ENCODE measurements at regions of chr3 and their contacts with region 1.

Region 1: DNA sequence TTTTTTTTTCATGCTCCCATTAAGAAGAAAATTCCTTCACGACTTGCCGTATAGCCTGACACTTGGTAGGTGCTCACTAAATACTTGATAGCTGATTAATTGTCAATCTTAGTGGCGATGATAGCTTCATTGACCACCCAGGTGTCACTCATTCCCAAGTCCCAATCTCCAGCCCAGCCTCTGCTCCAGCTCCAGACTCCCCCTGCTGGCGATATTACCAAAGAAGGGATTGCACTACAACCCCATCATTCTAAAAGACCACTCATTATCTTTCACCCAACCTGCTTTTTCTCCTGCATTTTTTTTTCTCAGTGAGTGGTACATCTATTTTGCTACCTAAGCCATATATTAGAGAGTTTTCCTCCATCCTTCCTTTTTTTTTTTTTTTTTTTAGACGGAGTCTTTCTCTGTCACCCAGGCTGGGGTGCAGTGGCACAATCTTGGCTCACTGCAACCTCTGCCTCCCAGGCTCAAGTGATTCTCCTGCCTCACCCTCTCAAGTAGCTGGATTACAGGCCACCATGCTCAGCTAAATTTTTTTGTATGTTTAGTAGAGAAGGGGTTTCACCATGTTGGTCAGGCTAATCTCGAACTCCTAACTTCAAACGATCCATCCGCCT is 19.5 kb upstream of the COMMD2 start:
- DNase-seq: peak in 1 of 2 experiments; percentile 79
- H3K4me3 ChIP-seq: no peak overlapping the region
- H3K27ac ChIP-seq: no peak overlapping the region
- H3K4me1 ChIP-seq: no peaks in the 10 kb centered on the region
- H3K27me3 ChIP-seq: no peaks in the 10 kb centered on the region; a peak in 1 of 7 replicates
- CTCF ChIP-seq: peak; percentile 77 to 87 (median 86)
- EP300 ChIP-seq: no peak
- POLR2A ChIP-seq: no peak
- RAD21 ChIP-seq: peak; percentile 73 to 76

Region 2: GRCh38 chr3:149512209-149512782 is 259.5 kb before region 1 on chr3:
- CTCF ChIA-PET with region 1: interaction called, 53 read pairs
- POLR2A ChIA-PET with region 1: no interaction called
- DNase-seq: peak in 1 of 2 experiments; percentile 72
- H3K4me3 ChIP-seq: peak overlapping the region in 1 of 4 experiments; percentile 34; a peak in 1 of 8 replicates
- H3K27ac ChIP-seq: no peak overlapping the region
- H3K4me1 ChIP-seq: no peaks in the 10 kb centered on the region
- H3K27me3 ChIP-seq: no peaks in the 10 kb centered on the region
- CTCF ChIP-seq: peak; percentile 81 to 92 (median 89)
- EP300 ChIP-seq: no peak
- POLR2A ChIP-seq: no peak
- RAD21 ChIP-seq: peak; percentile 92 to 93

Region 3: GRCh38 chr3:149717391-149718056 is 54.2 kb before region 1 on chr3:
- CTCF ChIA-PET with region 1: interaction called, 11 read pairs
- POLR2A ChIA-PET with region 1: no interaction called
- DNase-seq: peak in 1 of 2 experiments; percentile 57
- H3K4me3 ChIP-seq: no peak overlapping the region
- H3K27ac ChIP-seq: no peak overlapping the region
- H3K4me1 ChIP-seq: no peaks in the 10 kb centered on the region; a peak in 1 of 7 replicates
- H3K27me3 ChIP-seq: no peaks in the 10 kb centered on the region
- CTCF ChIP-seq: peak in 2 of 3 experiments; percentile 59 to 74; a peak in 2 of 4 replicates
- EP300 ChIP-seq: no peak
- POLR2A ChIP-seq: no peak
- RAD21 ChIP-seq: peak; percentile 81 to 82

Region 4: DNA sequence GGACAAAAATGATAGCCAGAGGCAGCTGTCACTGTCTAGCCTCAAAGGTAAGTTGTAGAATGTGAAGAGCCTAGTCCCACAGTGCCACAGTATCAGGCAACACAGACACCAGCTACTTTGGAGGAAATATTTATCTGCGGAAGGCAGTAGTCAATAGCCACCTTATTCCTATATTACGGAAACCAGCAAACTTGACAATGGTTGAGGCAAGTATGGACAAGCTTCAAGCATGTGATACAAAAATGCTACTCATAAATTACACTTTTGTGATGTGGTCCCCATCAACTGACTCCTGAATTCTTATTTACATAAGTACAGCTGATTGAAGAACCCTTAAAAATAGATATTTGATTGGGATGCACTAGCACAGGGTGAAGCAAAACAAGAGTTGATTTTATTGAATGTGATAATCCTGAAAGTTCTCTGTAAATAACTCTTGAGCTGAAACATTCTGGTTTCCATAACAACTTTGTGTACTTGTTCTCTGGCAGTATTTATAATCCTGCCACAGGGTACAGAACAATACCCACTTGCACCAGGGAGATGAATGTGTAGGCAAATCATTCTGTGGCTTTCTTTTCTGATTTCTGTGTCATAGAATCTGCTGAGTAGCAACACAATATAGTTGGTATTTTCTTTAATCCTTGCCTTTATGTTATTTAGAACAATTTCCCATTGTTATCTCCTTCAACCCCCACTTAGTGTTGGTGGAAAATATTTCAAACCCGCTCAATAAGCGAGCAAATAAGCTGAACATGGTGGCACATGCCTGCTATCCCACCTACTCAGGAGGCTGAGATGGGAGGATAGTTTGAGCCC is 20.9 kb after region 1 on chr3 and contains the start of gene ANKUB1:
- CTCF ChIA-PET with region 1: interaction called, 11 read pairs
- POLR2A ChIA-PET with region 1: interaction called, 3 read pairs
- DNase-seq: no peak
- H3K4me3 ChIP-seq: no peak within 1 kb of the TSS
- H3K27ac ChIP-seq: no peak within 1 kb of the TSS
- H3K4me1 ChIP-seq: no peaks in the 10 kb centered on the region
- H3K27me3 ChIP-seq: no peaks in the 10 kb centered on the region
- CTCF ChIP-seq: no peak
- EP300 ChIP-seq: no peak
- POLR2A ChIP-seq: no peak
- RAD21 ChIP-seq: no peak
- total RNA-seq, gene ANKUB1: not detected in 2 replicates

Region 5: DNA sequence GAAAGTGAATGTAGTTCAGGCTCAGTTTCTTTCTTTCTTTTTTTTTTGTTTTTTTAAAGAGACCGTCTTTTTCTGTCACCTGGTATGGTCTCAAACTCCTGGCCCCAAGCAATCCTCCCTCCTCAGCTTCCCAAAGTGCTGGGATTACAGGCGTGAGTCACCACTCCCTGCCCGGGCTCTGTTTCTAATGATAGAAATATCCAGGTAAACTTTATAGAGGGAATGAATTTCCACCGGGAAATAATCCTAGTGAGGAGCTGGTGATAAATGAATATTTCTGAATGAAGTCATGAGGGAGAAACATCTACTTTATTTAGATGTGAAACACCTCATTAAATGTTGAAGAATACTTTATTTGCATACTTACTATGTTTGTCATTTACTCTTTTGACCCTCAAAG is 48.4 kb after region 1 on chr3:
- CTCF ChIA-PET with region 1: interaction called, 13 read pairs
- POLR2A ChIA-PET with region 1: no interaction called
- DNase-seq: no peak
- H3K4me3 ChIP-seq: no peak overlapping the region
- H3K27ac ChIP-seq: no peak overlapping the region
- H3K4me1 ChIP-seq: peaks cover 0 to under 1% (median under 1%) of the 10 kb centered on the region in 4 experiments; a peak in 1 of 7 replicates
- H3K27me3 ChIP-seq: no peaks in the 10 kb centered on the region
- CTCF ChIP-seq: no peak
- EP300 ChIP-seq: no peak
- POLR2A ChIP-seq: no peak
- RAD21 ChIP-seq: no peak